ENCODE measurements at regions of chr15 and their contacts with region 1.

Region 1: GRCh38 chr15:86743283-86743903 is 663.7 kb downstream of the AGBL1 start:
- DNase-seq: no peak
- H3K4me3 ChIP-seq: no peak overlapping the region
- H3K27ac ChIP-seq: no peak overlapping the region
- H3K4me1 ChIP-seq: no peaks in the 10 kb centered on the region
- H3K27me3 ChIP-seq: no peaks in the 10 kb centered on the region
- CTCF ChIP-seq: peak in 5 of 6 experiments; percentile 49 to 74 (median 66)
- POLR2A ChIP-seq: no peak

Region 2: DNA sequence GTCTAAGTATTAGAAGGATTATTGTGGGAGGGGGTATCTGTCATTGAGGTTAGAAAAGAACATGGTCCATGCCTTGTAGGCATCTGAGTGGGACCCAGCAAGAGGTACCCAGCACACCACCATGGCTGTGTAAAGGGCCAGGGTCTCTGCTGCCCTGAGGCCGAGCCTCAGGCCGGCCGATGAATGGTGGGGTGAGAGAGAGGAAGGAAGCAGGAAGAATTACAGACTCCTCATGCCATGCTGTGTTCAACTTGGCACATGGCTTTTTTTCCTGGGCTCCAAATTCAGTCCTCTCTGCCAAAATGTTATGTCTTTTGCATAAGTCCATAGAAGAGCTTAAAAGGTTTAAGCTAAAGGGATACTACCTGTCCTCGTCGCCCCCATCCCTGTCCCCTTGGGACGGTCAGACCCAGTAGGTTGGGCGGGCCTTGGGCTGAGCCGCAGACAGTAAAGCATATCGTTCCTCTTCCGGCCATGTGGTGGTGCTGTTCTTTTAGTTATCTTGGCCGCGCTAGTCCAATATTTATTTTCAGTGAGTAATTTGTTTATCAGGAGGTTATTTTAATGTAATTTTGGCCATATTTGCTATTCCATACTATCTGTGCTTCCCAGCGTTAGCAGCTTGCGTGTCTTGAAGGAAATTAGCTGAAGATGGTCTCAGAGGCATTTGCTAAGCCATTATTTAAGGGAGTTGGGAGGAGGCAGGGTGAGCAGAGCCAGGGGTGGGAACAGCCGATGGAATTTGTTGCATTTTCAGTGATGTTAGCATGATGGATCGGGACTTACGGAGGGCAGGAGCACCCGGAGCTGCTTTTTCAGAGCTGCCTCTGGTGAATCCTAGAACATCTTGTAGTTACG is 511.3 kb before region 1 on chr15:
- intact Hi-C with region 1: loop called (anchors 10 kb)
- DNase-seq: no peak
- H3K4me3 ChIP-seq: peak overlapping the region in 1 of 4 donors; percentile 12
- H3K27ac ChIP-seq: no peak overlapping the region
- H3K4me1 ChIP-seq: peaks cover 0 to 9% (median 4%) of the 10 kb centered on the region in 3 donors
- H3K27me3 ChIP-seq: peaks cover 0 to 23% (median 0%) of the 10 kb centered on the region in 4 donors
- CTCF ChIP-seq: peak in 5 of 6 experiments; percentile 40 to 79 (median 59)
- POLR2A ChIP-seq: no peak

Region 3: GRCh38 chr15:86797135-86797534 is 53.7 kb after region 1 on chr15:
- intact Hi-C with region 1: no loop called
- DNase-seq: no peak
- H3K4me3 ChIP-seq: no peak overlapping the region
- H3K27ac ChIP-seq: no peak overlapping the region
- H3K4me1 ChIP-seq: no peaks in the 10 kb centered on the region
- H3K27me3 ChIP-seq: no peaks in the 10 kb centered on the region
- CTCF ChIP-seq: no peak
- POLR2A ChIP-seq: no peak

Region 4: GRCh38 chr15:86813907-86814306 is 70.5 kb after region 1 on chr15:
- intact Hi-C with region 1: no loop called
- DNase-seq: no peak
- H3K4me3 ChIP-seq: no peak overlapping the region
- H3K27ac ChIP-seq: no peak overlapping the region
- H3K4me1 ChIP-seq: no peaks in the 10 kb centered on the region
- H3K27me3 ChIP-seq: no peaks in the 10 kb centered on the region
- CTCF ChIP-seq: no peak
- POLR2A ChIP-seq: no peak

Region 5: GRCh38 chr15:86932456-86932855 is 189.1 kb after region 1 on chr15:
- intact Hi-C with region 1: no loop called
- DNase-seq: no peak
- H3K4me3 ChIP-seq: no peak overlapping the region
- H3K27ac ChIP-seq: no peak overlapping the region
- H3K4me1 ChIP-seq: no peaks in the 10 kb centered on the region
- H3K27me3 ChIP-seq: no peaks in the 10 kb centered on the region
- CTCF ChIP-seq: no peak
- POLR2A ChIP-seq: no peak

Region 6: DNA sequence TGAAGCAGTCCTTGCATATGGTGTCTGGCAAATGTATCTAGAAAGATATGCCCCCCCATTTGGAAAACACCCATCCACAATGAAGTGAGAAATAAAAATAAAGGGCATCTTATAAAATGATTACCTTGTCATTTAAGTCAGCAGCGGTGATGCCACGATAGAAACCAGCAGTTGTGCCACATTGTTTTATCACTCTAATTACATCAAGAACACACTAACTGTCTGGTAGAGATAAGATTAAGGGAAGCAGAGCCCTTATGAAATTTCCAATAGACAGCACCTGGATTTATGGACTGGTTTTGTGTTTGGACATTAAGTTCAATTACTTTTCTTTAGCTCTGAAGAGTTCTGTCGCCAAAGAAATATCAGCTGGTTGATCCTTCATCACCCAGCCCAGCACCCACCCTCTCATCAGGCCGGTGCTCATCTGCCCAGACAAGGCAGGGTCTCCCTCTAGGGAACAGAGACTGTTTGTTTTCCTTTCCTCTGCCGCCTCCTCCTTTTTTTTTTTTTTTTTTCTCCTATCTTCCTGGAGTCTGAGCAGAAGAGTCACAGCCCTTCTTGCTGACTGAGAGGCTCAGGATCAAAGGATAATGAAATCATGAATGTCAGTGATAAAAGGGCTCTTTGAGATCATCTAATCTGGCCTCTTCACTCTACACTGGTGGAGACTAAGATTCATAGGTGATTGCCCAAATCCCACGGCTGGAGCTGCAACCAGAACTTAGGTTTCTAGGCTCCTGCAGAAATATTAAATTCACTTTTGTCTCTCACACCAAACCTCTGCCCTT is 1049.1 kb after region 1 on chr15:
- intact Hi-C with region 1: no loop called
- DNase-seq: no peak
- H3K4me3 ChIP-seq: no peak overlapping the region
- H3K27ac ChIP-seq: no peak overlapping the region
- H3K4me1 ChIP-seq: no peaks in the 10 kb centered on the region
- H3K27me3 ChIP-seq: no peaks in the 10 kb centered on the region
- CTCF ChIP-seq: no peak
- POLR2A ChIP-seq: no peak

Measured in esophagus squamous epithelium (tissue), 5 donors.